OCI-LY7 (cell line): ENCODE measurements at regions of chr22 and their contacts with region 1.

Region 1: DNA sequence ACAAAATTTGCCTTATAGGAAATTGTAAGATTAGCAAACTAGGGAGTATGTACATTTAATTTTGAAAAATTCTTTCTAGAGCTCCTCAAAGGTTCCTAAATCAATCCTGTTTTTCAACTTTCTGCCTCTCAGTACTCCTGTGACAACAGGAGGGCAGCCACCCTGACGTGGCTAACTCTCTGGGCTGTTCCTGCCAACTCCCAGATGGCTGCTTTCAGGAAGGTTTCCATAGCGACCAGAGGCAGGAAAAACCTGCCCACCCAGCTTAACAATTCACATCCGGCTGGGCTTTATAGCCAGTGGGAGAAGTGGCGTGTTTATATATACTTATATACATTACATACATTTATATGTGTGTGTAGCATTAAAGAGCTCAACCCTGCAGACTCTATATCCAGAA is 26.5 kb downstream of the SGSM3 start:
- DNase-seq: no peak
- H3K4me3 ChIP-seq: no peak overlapping the region
- H3K27ac ChIP-seq: no peak overlapping the region
- H3K4me1 ChIP-seq: peaks cover 52% of the 10 kb centered on the region
- CTCF ChIP-seq: no peak

Region 2: DNA sequence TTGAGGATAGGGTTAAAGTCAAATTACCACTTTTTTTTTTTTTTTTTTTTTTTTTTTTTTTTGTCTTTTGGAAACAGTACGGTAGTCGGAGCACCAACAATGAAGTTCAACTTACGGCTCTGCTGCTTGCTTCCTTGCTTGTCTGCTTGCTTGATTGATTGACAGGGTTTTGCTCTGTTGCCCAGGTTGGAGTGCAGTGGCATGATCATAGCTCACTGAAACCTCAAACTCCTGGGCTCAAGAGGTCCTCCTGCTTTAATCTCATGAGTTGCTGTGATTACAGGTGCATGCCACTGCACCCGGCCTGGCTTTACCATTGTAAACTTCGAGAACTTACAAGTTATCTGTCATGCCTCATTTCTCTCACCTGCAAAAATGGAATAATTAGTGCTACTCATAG is 20.7 kb before region 1 on chr22:
- CTCF ChIA-PET with region 1: interaction called, 3 read pairs
- POLR2A ChIA-PET with region 1: interaction called, 13 read pairs
- intact Hi-C with region 1: loop called (anchors 1 kb)
- DNase-seq: peak; percentile 90
- H3K4me3 ChIP-seq: peak overlapping the region; percentile 58
- H3K27ac ChIP-seq: peak overlapping the region; percentile 97
- H3K4me1 ChIP-seq: peaks cover 71% of the 10 kb centered on the region
- CTCF ChIP-seq: no peak

Region 3: GRCh38 chr22:40385036-40385782 is 11.7 kb before region 1 on chr22:
- CTCF ChIA-PET with region 1: interaction called, 3 read pairs
- POLR2A ChIA-PET with region 1: interaction called, 13 read pairs
- intact Hi-C with region 1: no loop called
- DNase-seq: peak; percentile 82
- H3K4me3 ChIP-seq: peak overlapping the region; percentile 54
- H3K27ac ChIP-seq: peak overlapping the region; percentile 80
- H3K4me1 ChIP-seq: peaks cover 61% of the 10 kb centered on the region
- CTCF ChIP-seq: peak; percentile 60

Region 4: DNA sequence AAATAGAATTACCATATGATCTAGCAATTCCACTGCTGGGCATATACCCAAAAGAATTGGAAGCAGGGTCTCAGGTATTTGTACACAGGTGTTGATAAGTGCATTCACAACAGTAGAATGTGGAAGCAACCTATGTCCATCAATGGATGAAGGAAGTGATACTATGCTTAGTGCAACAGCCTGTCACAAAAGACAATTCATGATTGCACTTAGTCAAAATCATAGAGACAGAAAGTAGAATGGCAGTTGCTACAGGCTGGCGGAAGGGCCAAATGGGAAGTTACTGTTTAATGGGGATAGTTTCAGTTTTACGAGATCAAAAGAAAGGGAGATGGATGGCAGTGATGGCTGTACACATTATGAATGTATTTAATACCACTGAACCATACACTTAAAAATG is 15.6 kb after region 1 on chr22:
- CTCF ChIA-PET with region 1: no interaction called
- POLR2A ChIA-PET with region 1: interaction called, 5 read pairs
- intact Hi-C with region 1: loop called (anchors 1 kb)
- DNase-seq: peak; percentile 90
- H3K4me3 ChIP-seq: peak overlapping the region; percentile 14
- H3K27ac ChIP-seq: peak overlapping the region; percentile 98
- H3K4me1 ChIP-seq: peaks cover 74% of the 10 kb centered on the region
- CTCF ChIP-seq: no peak